HEK293 (cell line): ENCODE measurements at regions of chr12 and their contacts with region 1.

Region 1: DNA sequence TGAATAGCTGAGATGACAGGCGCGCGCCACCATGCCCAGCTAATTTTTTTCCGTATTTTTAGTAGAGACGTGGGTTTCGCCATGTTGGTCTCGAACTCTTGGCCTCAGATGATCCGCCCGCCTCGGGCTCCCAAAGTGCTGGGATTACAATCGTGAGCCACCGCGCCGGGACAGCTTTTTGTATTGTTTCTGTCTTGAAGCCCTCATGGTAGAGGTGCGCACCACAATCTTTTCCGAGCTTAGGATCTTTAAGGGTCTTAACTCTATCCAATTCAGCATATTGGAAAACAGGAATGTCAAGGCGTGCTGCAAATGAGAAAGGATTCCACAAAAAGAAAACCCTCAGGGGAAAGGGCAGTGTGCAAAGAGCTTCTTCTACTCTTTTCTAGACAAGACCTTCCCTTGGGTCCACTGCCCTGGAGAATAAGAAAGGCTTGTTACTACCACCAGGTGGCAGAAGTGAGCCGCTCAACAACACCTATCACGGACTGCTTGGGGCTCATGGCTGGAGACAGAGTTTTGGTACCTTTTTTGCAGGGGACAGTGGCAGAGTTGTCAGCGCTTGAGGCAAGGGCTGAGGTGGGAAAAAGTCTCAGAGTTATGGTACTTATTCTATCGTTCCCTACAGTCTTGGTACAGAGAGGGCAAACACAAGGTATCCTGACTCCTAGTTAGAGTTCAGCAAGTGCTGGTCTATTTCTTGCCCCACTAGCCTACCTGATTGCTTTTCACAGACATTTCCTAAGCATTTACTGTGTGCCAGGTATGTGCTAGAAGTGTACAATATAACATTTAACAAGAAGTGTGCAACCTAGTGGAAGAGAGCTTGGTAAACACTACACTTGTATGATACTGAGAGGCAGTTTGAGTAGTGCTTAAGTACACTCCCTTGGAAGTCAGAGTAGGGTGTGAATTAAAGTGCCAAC is 16.4 kb upstream of the SP7 start:
- H3K4me3 ChIP-seq: no peak overlapping the region
- H3K27ac ChIP-seq: no peak overlapping the region
- H3K4me1 ChIP-seq: no peaks in the 10 kb centered on the region
- CTCF ChIP-seq: peak; percentile 71; the same call in 1 of the 2 replicates

Region 2: GRCh38 chr12:53098982-53099651 is 253.5 kb before region 1 on chr12:
- CTCF ChIA-PET with region 1: no interaction called
- POLR2A ChIA-PET with region 1: no interaction called
- H3K4me3 ChIP-seq: no peak overlapping the region
- H3K27ac ChIP-seq: no peak overlapping the region
- H3K4me1 ChIP-seq: peaks cover 3% of the 10 kb centered on the region; the same call in 1 of the 2 replicates
- CTCF ChIP-seq: peak; percentile 87

Region 3: GRCh38 chr12:53327435-53328042 is 25.1 kb before region 1 on chr12:
- CTCF ChIA-PET with region 1: interaction called, 36 read pairs
- POLR2A ChIA-PET with region 1: interaction called, 4 read pairs
- H3K4me3 ChIP-seq: no peak overlapping the region
- H3K27ac ChIP-seq: no peak overlapping the region
- H3K4me1 ChIP-seq: no peaks in the 10 kb centered on the region
- CTCF ChIP-seq: 0 out of 2 replicates have a peak, but pooled peaks have one; percentile 6

Region 4: GRCh38 chr12:53379389-53380103 is 27.0 kb after region 1 on chr12:
- CTCF ChIA-PET with region 1: interaction called, 114 read pairs
- POLR2A ChIA-PET with region 1: interaction called, 17 read pairs
- H3K4me3 ChIP-seq: peak overlapping the region; percentile 70
- H3K27ac ChIP-seq: peak overlapping the region; percentile 95
- H3K4me1 ChIP-seq: peaks cover 17% of the 10 kb centered on the region
- CTCF ChIP-seq: no peak

Region 5: GRCh38 chr12:53414756-53415417 is 62.3 kb after region 1 on chr12:
- CTCF ChIA-PET with region 1: interaction called, 134 read pairs
- POLR2A ChIA-PET with region 1: no interaction called
- H3K4me3 ChIP-seq: no peak overlapping the region
- H3K27ac ChIP-seq: no peak overlapping the region; the same call in 1 of the 2 replicates
- H3K4me1 ChIP-seq: peaks cover 10% of the 10 kb centered on the region
- CTCF ChIP-seq: no peak

Region 6: DNA sequence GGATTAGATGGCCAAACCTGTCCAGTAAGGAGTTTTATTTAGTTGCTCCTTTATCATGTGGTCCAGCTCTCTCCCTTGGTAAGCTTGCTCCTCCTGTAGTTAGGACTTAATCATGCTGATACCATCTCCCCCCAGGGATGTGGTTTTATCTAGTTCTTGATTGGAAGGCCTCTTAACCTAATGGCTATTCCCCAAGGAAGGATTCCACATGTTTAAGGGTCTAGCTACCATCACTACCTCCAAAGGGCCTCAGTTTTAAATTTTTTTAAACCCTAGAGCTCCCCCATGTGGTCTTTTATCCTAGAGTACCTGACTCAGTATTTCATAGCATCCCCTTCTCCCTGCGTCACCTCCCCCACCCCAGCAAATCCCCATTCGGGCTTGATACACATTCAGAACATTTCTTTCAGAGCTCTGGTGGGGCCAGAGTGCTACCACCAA is 124.2 kb after region 1 on chr12:
- CTCF ChIA-PET with region 1: interaction called, 25 read pairs
- POLR2A ChIA-PET with region 1: interaction called, 5 read pairs
- H3K4me3 ChIP-seq: no peak overlapping the region
- H3K27ac ChIP-seq: no peak overlapping the region
- H3K4me1 ChIP-seq: no peaks in the 10 kb centered on the region
- CTCF ChIP-seq: no peak

Region 7: DNA sequence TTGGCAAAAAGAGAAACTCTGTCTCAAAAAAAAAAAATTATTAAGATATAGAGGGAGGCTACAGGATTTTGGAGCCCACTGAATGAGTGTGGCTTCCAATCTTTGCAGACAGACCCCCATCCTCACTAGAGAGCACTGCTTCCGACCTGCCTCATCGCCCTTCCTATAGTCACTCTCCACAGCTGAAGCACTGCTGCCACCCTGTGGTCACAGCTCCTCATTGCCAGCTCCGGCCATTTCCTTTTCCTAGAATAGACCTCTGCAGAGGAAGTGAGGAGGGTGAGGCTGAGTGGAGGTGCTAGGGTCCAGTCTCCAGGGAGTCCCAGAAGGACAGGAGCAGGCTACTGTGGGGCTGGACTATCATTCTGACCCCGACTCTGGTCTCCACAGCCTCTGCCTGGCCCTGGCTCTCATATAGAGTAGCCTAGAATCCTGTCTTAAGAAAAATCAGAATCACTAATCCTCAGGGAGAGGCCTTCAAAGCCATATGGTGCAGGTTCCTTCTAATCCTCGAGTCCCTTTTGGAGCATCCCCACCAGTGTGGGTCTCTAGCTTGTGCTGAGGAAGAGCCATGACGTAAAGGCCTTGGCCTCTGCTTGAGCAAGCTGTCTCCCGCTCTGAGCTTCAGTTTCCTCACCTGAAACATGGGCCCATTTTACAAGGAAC is 156.1 kb after region 1 on chr12:
- CTCF ChIA-PET with region 1: interaction called, 63 read pairs
- POLR2A ChIA-PET with region 1: no interaction called
- H3K4me3 ChIP-seq: no peak overlapping the region
- H3K27ac ChIP-seq: no peak overlapping the region
- H3K4me1 ChIP-seq: no peaks in the 10 kb centered on the region
- CTCF ChIP-seq: peak; percentile 91

Region 8: DNA sequence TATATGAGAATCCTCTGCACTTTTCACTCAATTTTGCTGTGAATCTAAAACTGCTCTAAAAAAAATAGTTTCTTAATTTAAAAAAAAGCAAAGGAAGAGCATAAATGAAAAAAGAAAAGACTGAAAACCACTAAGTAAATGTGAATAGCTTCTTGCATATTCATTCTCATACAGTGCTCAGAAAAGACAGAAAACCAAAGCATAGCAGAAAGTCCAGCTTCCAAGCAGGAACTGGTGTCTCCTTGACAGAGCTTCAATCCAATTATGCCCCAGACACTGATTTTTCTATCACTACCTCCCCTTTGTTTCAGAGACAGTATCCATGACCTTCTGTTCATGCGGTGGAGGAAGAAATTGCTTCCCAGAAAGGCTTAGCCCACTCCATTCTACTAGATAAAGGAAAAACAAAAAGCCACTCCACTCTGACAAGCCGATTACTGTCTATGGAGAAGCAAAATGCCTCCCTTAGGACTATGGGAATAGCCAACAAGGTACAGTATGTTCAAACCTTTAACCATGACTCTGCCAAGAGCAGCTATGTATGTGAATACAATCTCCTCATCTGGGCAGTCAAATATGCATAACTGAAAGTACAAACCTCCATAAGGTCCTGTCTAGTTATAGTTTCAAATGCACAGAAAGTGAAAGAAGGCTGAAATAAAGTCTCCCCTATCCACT is 233.0 kb after region 1 on chr12:
- CTCF ChIA-PET with region 1: no interaction called
- POLR2A ChIA-PET with region 1: no interaction called
- H3K4me3 ChIP-seq: no peak overlapping the region
- H3K27ac ChIP-seq: no peak overlapping the region
- H3K4me1 ChIP-seq: no peaks in the 10 kb centered on the region
- CTCF ChIP-seq: no peak